Spleen (tissue), 13 donors: ENCODE measurements at regions of chr11 and their contacts with region 1.

Region 1: DNA sequence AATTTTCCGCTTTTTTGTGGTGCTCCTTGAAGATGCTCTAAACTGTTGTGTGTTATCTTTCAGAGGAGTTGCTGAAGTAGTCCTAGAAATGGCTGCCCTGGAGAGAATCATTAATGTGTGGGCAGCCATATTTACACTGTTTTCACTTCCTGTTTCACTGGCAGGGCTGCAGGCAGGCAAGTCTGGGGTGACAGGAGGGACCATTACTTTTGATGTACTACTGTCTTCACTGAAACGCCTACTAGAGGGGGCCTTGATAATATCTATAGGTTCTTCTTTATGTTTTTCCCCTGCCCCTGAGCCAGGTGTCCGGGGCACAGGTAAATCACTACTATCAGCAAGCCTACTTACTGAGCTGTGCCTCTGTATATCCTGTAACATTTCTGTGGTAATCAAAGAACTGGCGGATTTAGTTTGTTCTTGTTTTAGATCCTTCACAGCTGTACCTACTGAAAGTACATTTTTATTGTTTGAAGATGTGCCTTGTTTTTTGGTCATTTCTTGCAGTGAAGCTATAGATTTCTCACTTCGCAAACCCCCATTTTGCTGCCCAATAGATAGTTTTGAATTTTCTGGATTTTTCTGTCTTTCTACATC is 39.7 kb downstream of the ACAT1 start:
- DNase-seq: no peak
- H3K4me3 ChIP-seq: no peak overlapping the region
- H3K27ac ChIP-seq: peak overlapping the region in 5 of 8 donors; percentile 1 to 48 (median 38)
- H3K4me1 ChIP-seq: peaks cover 0 to 12% (median 2%) of the 10 kb centered on the region in 6 donors
- H3K27me3 ChIP-seq: no peaks in the 10 kb centered on the region
- CTCF ChIP-seq: no peak
- POLR2A ChIP-seq: no peak

Region 2: GRCh38 chr11:107619926-107620325 is 541.1 kb before region 1 on chr11:
- intact Hi-C with region 1: no loop called
- DNase-seq: no peak
- H3K4me3 ChIP-seq: no peak overlapping the region
- H3K27ac ChIP-seq: no peak overlapping the region
- H3K4me1 ChIP-seq: no peaks in the 10 kb centered on the region
- H3K27me3 ChIP-seq: peaks cover 0 to 10% (median 5%) of the 10 kb centered on the region in 7 donors
- CTCF ChIP-seq: no peak
- POLR2A ChIP-seq: no peak

Region 3: DNA sequence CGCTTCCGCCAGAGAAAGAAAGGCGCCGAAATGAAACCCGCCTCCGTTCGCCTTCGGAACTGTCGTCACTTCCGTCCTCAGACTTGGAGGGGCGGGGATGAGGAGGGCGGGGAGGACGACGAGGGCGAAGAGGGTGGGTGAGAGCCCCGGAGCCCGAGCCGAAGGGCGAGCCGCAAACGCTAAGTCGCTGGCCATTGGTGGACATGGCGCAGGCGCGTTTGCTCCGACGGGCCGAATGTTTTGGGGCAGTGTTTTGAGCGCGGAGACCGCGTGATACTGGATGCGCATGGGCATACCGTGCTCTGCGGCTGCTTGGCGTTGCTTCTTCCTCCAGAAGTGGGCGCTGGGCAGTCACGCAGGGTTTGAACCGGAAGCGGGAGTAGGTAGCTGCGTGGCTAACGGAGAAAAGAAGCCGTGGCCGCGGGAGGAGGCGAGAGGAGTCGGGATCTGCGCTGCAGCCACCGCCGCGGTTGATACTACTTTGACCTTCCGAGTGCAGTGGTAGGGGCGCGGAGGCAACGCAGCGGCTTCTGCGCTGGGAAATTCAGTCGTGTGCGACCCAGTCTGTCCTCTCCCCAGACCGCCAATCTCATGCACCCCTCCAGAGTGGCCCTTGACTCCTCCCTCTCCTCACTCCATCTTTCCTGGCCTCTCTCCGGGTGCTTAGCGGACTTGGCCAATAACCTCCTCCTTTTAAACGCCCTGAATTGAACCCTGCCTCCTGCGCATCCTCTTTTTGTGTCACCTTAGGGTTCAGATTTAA is 61.8 kb after region 1 on chr11 and contains the start of gene ATM:
- intact Hi-C with region 1: loop called (anchors 10 kb)
- DNase-seq: peak; percentile 100
- H3K4me3 ChIP-seq: peak within 1 kb of the TSS; percentile 70 to 91 (median 76)
- H3K27ac ChIP-seq: peak within 1 kb of the TSS; percentile 94 to 99 (median 98)
- H3K4me1 ChIP-seq: peaks cover 17 to 87% (median 71%) of the 10 kb centered on the region in 6 donors
- H3K27me3 ChIP-seq: no peaks in the 10 kb centered on the region
- CTCF ChIP-seq: peak; percentile 65 to 93 (median 85)
- POLR2A ChIP-seq: peak in 2 of 3 donors; percentile 12 to 82
- total RNA-seq, gene ATM: 186 to 408 (median 235) TPM